Activated CD4-positive, alpha-beta memory T cell treated with anti-CD3 and anti-CD28 coated beads for 36 hours (primary cell): ENCODE measurements at regions of chr1 and their contacts with region 1.

Region 1: GRCh38 chr1:166838766-166839599 is at the start of gene POGK:
- DNase-seq: peak; percentile 92
- H3K4me3 Mint-ChIP-seq: peak within 1 kb of the TSS; percentile 88
- H3K27ac Mint-ChIP-seq: peak within 1 kb of the TSS; percentile 95
- H3K4me1 Mint-ChIP-seq: peaks cover 41% of the 10 kb centered on the region
- H3K27me3 Mint-ChIP-seq: no peaks in the 10 kb centered on the region
- total RNA-seq, gene POGK: 43.0 to 43.1 TPM

Region 2: GRCh38 chr1:166083887-166084286 is 755.1 kb before region 1 on chr1:
- CTCF ChIA-PET with region 1: no interaction called
- POLR2A ChIA-PET with region 1: no interaction called
- intact Hi-C with region 1: loop called (anchors 5 kb)
- DNase-seq: peak; percentile 41
- H3K4me3 Mint-ChIP-seq: no peak overlapping the region
- H3K27ac Mint-ChIP-seq: peak overlapping the region; percentile 29
- H3K4me1 Mint-ChIP-seq: peaks cover 40% of the 10 kb centered on the region
- H3K27me3 Mint-ChIP-seq: no peaks in the 10 kb centered on the region

Region 3: DNA sequence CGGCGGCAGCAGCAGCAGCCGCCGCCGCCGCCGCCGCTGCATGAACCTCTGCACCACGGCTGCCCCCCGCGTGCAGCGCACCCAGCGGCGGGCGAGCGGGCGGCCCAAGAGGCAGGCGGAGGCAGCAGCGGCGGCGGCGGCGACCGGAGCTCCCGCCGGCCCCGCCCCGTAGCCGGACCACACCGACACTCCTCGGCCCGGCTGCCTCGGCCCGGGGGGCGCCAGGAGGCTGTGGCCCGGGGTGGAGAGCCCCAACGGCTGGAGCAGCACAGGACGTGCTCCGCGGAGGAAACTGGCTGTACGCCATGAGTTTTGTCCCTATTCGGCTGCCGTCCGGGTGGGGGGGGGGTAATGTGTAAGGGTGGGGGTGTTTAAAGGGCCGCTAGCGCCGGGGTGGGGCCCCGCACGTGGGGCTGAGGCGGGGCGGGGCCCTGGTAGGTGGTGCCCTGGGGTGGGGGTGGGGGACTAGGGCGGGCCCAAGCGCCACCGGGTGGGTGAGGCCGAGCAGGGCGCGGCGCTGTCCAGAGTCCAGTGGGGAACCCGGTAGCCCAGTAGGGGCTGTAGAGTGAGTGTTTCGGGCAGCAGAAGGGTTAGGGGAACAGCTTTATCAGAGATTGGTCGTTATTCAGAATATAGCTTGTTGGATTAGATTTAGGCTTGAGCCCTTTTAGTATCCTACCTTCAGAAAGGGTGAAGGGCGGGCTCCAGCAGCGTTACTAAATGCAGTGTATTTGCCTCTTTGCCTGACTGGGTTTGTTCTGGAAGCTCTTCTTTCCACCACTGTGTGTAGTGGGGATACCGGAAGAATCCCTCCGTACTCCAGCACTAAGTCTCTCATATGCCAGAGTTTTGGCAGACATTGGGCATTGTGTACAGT is 672.0 kb before region 1 on chr1 and contains the start of gene FAM78B:
- CTCF ChIA-PET with region 1: no interaction called
- POLR2A ChIA-PET with region 1: no interaction called
- intact Hi-C with region 1: loop called (anchors 5 kb)
- DNase-seq: peak; percentile 72
- H3K4me3 Mint-ChIP-seq: peak within 1 kb of the TSS; percentile 67
- H3K27ac Mint-ChIP-seq: no peak within 1 kb of the TSS
- H3K4me1 Mint-ChIP-seq: peaks cover 23% of the 10 kb centered on the region
- H3K27me3 Mint-ChIP-seq: peaks cover 33% of the 10 kb centered on the region
- total RNA-seq, gene FAM78B: 0.24 to 0.27 TPM

Region 4: DNA sequence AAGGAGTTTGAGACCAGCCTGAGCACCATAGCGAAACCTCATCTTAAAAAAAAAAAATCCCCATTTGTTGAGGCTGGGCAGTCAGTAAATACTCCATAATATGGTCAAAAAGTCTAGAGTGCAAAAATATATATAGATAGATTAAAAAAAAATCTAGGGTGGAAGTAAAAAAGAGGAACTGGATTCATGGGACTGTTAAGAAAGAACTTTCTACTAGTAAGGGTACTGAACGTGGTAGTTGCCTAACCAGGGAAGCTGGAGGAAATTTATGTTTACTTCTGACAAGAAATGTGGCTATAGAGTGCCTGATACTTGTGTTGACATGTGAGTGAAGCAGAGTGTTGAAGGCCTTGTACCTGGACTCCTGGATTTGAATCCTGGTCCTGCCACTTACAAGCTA is 406.3 kb before region 1 on chr1:
- CTCF ChIA-PET with region 1: no interaction called
- POLR2A ChIA-PET with region 1: no interaction called
- intact Hi-C with region 1: no loop called
- DNase-seq: no peak
- H3K4me3 Mint-ChIP-seq: no peak overlapping the region
- H3K27ac Mint-ChIP-seq: no peak overlapping the region
- H3K4me1 Mint-ChIP-seq: no peaks in the 10 kb centered on the region
- H3K27me3 Mint-ChIP-seq: peaks cover 6% of the 10 kb centered on the region

Region 5: DNA sequence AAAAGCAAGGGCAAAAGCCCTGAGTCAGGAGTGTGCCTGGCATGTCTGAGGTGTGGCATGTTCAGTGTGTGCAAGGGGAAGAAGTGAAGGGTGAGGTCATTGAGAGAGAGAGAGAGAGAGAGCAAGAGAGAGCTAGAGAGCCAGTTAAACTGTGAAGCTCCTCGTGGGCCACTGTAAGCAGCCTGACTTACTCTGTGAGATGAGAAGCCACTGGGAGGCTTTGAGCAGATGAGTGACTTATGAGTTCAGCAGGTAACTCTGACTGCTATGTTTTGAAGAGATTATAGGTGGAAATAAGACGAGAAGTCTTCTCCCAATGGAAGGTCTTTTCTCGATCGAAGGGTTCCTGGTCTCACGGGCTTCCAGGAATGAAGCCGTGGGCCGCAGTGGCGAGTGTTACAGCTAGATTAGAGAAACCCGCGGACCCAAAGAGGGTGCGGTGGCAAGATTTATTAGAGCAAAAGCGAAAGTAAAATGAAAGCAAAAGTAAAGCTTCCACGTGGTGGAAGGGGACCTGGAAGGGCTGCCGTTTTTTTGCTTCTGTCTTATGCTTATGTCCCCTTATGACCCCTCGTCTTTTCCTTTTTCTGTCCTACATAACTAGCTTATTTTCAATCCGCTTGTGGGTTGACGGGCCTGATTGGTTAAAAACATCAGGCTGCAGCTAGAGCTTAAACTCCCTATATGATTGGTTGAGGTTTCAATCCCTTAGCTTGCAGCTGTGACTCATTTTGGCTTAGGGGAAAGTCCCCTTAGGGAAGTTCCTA is 349.1 kb before region 1 on chr1:
- CTCF ChIA-PET with region 1: no interaction called
- POLR2A ChIA-PET with region 1: interaction called, 4 read pairs
- intact Hi-C with region 1: loop called (anchors 1 kb)
- DNase-seq: peak; percentile 58
- H3K4me3 Mint-ChIP-seq: no peak overlapping the region
- H3K27ac Mint-ChIP-seq: no peak overlapping the region
- H3K4me1 Mint-ChIP-seq: peaks cover 8% of the 10 kb centered on the region
- H3K27me3 Mint-ChIP-seq: peaks cover 1% of the 10 kb centered on the region

Region 6: GRCh38 chr1:166875734-166876539 is 37.0 kb after region 1 on chr1 and contains the start of gene TADA1:
- CTCF ChIA-PET with region 1: interaction called, 3 read pairs
- POLR2A ChIA-PET with region 1: interaction called, 9 read pairs
- intact Hi-C with region 1: loop called (anchors 1 kb)
- DNase-seq: peak; percentile 100
- H3K4me3 Mint-ChIP-seq: peak within 1 kb of the TSS; percentile 96
- H3K27ac Mint-ChIP-seq: peak within 1 kb of the TSS; percentile 97
- H3K4me1 Mint-ChIP-seq: peaks cover 47% of the 10 kb centered on the region
- H3K27me3 Mint-ChIP-seq: no peaks in the 10 kb centered on the region
- total RNA-seq, gene TADA1: 16.9 to 18.3 TPM

Region 7: DNA sequence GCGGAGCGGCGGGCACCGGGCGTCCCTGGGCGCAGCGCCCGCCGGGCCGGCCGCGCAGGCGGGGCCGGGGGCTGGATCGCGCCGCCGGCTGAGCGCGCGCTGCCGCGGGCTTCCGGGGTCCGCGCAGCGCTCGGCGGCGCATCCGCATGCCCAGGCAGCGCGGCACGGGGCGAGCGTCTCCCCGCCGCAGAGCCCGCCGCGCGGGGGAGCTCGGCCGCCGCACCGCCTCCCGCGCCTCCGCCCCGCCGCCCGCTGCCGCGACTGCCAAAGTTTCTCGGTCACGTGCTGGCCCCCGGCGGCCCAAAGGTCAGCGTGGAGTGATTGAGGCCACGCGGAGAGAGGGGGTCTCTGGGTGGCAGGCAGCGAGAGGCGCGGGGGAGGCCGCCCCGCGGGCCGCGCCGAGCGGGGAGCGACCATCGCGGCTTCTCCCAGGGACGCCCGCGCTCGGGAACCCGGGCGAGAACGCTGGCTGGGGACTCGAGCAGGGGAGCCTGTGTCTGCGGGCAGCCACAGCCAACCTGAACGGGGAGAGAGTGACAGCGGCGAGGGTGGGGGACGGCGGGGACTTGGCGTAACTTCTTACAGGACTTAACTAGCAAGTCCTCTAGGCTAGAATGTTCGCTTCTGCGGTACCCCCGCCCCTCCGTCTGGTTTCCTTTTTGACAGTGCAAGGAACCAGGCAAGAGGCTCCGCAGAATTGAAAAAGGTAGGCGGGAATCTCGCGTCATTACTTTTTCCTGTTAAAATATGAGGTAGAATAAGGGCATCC is 136.6 kb after region 1 on chr1 and contains the start of gene ILDR2:
- CTCF ChIA-PET with region 1: no interaction called
- POLR2A ChIA-PET with region 1: no interaction called
- intact Hi-C with region 1: loop called (anchors 5 kb)
- DNase-seq: peak; percentile 88
- H3K4me3 Mint-ChIP-seq: peak within 1 kb of the TSS; percentile 88
- H3K27ac Mint-ChIP-seq: peak within 1 kb of the TSS; percentile 88
- H3K4me1 Mint-ChIP-seq: peaks cover 47% of the 10 kb centered on the region
- H3K27me3 Mint-ChIP-seq: peaks cover 16% of the 10 kb centered on the region
- total RNA-seq, gene ILDR2: 12.5 to 13.0 TPM